ENCODE measurements at regions of chr9 and their contacts with region 1.

Region 1: DNA sequence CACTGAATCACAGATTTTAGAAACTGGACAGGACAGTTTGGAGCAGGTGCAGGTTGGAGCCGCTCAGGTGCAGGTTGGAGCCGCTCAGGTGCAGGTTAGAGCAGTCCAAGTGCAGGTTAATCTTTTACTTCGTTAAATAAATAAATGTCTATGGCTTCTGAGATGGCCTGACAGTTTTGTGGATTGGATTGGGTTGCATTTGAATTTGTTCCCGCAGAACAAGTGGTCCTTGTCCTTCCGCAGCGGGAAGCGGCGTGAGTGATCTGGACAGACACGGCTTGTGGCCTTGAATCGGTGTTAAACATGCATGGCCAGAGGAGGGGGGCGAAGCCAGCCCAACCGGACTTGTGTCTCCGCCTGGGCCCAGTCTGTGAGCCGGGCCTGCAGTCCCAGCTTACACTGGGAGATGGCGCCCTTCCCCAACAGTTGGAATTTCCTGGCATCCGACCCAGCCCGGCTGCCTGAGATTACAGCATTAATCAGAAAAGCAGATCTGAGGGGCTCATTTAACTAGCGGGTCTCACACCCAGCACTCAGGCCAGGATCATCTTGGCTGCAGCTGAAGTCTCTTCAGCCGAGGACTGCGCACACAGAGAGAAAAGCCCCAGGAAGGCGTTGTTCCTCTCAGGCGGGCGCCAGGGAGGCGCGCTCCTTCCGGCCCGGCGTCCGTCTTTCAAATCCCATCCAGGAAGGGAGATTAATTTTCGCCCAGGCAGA is 1.5 kb upstream of the OLFM1 start:
- DNase-seq: peak; percentile 86 to 90
- H3K4me3 ChIP-seq: peak overlapping the region; percentile 21 to 55 (median 28)
- H3K27ac ChIP-seq: peak overlapping the region in 2 of 5 donors; percentile 11 to 43
- H3K4me1 ChIP-seq: peaks cover 30 to 50% (median 42%) of the 10 kb centered on the region in 4 donors
- H3K27me3 ChIP-seq: peaks cover 0 to 79% (median 36%) of the 10 kb centered on the region in 3 donors
- CTCF ChIP-seq: peak in 6 of 7 experiments; percentile 6 to 97 (median 91)
- EP300 ChIP-seq: no peak
- POLR2A ChIP-seq: no peak

Region 2: DNA sequence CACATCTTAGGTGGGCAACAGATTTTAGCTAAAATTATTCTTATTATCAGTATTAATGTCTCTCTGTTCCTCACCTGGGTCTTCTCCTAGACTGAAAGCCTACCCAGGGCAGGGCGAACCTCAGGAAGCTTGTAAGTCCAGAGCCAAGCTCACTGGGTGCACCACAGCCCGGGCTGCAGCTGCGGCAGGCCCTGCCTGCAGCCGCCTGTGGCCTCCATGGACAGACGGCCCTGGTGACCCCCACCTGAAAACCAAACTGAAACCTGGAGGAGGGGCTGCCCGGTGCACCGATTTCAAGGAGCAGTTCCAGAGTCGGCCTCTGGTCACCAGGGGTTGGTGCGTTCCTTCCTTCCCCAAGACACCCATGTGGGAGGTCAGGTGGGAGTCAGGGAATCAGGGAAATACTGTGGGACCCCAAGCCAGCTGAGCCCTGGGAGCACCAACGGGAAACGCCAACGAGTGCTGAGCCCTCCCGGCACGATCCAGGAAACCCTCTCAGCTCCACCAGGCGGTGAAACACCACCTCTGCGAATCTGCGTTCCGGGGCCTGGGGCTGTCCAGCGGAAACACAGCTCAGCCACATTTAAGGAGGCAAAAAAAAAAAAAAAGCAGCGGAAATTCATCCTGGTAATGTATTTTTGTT is 325.0 kb after region 1 on chr9:
- intact Hi-C with region 1: loop called (anchors 5 kb)
- DNase-seq: peak in 1 of 2 donors; percentile 3
- H3K4me3 ChIP-seq: no peak overlapping the region
- H3K27ac ChIP-seq: no peak overlapping the region
- H3K4me1 ChIP-seq: peaks cover 0 to 9% (median 7%) of the 10 kb centered on the region in 4 donors
- H3K27me3 ChIP-seq: peaks cover 0 to 62% (median 4%) of the 10 kb centered on the region in 3 donors
- CTCF ChIP-seq: no peak
- EP300 ChIP-seq: no peak
- POLR2A ChIP-seq: no peak